CD4-positive, alpha-beta memory T cell (primary cell): ENCODE measurements at regions of chr1 and their contacts with region 1.

Region 1: GRCh38 chr1:155227261-155228095 is 19.0 kb downstream of the MTX1 start:
- DNase-seq: peak; percentile 94 to 99 (median 98)
- H3K4me3 ChIP-seq: peak overlapping the region; percentile 80 to 86
- H3K4me3 Mint-ChIP-seq: peak overlapping the region; percentile 78 to 93 (median 88)
- H3K27ac ChIP-seq: peak overlapping the region; percentile 69
- H3K27ac Mint-ChIP-seq: peak overlapping the region; percentile 77 to 97 (median 93)
- H3K4me1 ChIP-seq: peaks cover 19% of the 10 kb centered on the region
- H3K4me1 Mint-ChIP-seq: peaks cover 14 to 34% (median 25%) of the 10 kb centered on the region in 4 donors
- H3K27me3 ChIP-seq: no peaks in the 10 kb centered on the region
- H3K27me3 Mint-ChIP-seq: no peaks in the 10 kb centered on the region

Region 2: GRCh38 chr1:155193275-155193990 is 34.0 kb before region 1 on chr1:
- CTCF ChIA-PET with region 1: interaction called, 22 read pairs
- POLR2A ChIA-PET with region 1: interaction called, 16 read pairs
- intact Hi-C with region 1: loop called (anchors 1 kb)
- DNase-seq: peak; percentile 60 to 72 (median 62)
- H3K4me3 ChIP-seq: peak overlapping the region; percentile 58 to 73
- H3K4me3 Mint-ChIP-seq: peak overlapping the region; percentile 87 to 97 (median 92)
- H3K27ac ChIP-seq: peak overlapping the region; percentile 67
- H3K27ac Mint-ChIP-seq: peak overlapping the region; percentile 91 to 99 (median 98)
- H3K4me1 ChIP-seq: peaks cover 27% of the 10 kb centered on the region
- H3K4me1 Mint-ChIP-seq: peaks cover 19 to 38% (median 24%) of the 10 kb centered on the region in 4 donors
- H3K27me3 ChIP-seq: no peaks in the 10 kb centered on the region
- H3K27me3 Mint-ChIP-seq: no peaks in the 10 kb centered on the region